PC-3 (cell line): ENCODE measurements at regions of chr14 and their contacts with region 1.

Region 1: DNA sequence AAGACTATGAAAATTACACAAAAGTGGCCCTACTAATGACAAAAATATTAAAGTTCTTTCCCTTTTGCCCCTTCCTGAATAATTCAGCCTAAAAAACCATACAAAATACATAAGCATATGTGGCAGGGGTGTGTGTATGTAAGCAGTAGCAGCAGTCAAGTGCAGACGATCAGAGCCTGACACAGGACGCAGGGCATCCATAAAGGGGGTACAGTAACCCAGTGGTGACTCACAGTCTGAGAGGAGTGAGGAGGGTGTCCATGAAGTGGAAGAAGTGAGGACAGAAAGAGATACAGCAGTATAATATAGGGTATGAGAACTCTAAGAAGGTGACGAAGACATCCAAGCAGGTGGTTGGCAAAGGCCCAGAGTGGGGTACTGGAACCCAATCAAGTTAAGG is 56.7 kb downstream of the RALGAPA1 start:
- DNase-seq: no peak
- ATAC-seq: no peak
- H3K4me3 ChIP-seq: no peak overlapping the region
- H3K27ac ChIP-seq: no peak overlapping the region
- H3K4me1 ChIP-seq: no peaks in the 10 kb centered on the region
- H3K27me3 ChIP-seq: no peaks in the 10 kb centered on the region
- CTCF ChIP-seq: no peak

Region 2: DNA sequence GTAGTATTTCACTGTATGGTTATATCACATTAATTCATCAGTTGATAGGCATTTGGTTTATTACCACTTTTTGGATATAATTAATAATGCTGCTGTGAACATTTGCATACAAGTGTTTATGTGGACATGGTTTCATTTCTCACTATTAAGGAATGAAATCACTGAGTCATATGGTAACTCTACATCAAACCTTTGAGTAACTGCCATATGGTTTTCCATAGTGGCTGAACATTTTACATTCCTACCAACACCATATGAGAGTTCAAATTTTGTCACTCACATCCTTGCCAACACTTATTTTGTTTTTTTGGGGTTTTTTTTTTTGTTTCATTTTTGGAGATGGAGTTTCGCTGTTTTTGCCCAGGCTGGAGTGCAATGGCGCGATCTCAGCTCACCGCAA is 1182.6 kb before region 1 on chr14:
- CTCF ChIA-PET with region 1: no interaction called
- POLR2A ChIA-PET with region 1: interaction called, 11 read pairs
- intact Hi-C with region 1: no loop called
- DNase-seq: no peak
- ATAC-seq: no peak
- H3K4me3 ChIP-seq: no peak overlapping the region
- H3K27ac ChIP-seq: no peak overlapping the region
- H3K4me1 ChIP-seq: no peaks in the 10 kb centered on the region
- H3K27me3 ChIP-seq: no peaks in the 10 kb centered on the region
- CTCF ChIP-seq: no peak